Dendritic cell treated with granulocyte-macrophage colony-stimulating factor and Interleukin-4, amounts not matched to agents 40 ng/mL and 50 ng/mL, for 4 days (primary cell): ENCODE measurements at regions of chr11 and their contacts with region 1.

Region 1: DNA sequence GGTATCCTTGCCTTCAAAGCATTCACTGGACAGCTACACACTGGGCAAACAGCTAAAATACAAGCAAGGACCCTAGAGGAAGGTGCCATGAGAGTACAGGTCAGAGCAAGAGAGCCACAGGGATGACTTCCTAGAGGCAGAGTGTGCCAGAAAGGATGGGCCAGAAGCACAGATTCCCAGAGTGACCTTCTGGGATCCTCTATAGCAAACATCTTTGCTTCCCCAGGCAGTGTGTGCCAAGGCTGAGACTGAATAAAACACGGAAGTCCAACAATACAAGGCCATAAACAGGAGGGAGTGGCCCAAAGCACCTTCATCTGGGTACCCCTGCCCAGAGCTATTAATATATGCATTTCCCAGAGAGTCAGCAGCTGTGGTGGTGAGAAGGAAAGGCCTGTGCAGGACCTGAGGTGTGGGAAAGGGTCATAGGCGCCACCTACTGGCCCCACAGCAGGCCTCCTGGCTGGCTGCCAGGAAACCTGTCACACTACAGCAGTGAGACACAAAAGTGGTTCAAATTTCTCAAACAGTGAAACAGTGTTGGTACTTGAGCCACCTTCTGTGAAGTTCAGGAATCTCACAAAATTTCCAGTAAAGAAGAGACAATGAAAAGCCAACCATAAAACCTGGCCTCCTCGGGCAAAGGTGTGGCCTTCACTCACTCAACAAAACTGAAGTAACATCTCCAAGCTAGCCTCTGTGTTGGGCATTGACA is 20.3 kb downstream of the CLPB start:
- H3K4me3 Mint-ChIP-seq: no peak overlapping the region
- H3K27ac Mint-ChIP-seq: no peak overlapping the region
- H3K4me1 Mint-ChIP-seq: peaks cover 60% of the 10 kb centered on the region
- H3K27me3 Mint-ChIP-seq: no peaks in the 10 kb centered on the region

Region 2: DNA sequence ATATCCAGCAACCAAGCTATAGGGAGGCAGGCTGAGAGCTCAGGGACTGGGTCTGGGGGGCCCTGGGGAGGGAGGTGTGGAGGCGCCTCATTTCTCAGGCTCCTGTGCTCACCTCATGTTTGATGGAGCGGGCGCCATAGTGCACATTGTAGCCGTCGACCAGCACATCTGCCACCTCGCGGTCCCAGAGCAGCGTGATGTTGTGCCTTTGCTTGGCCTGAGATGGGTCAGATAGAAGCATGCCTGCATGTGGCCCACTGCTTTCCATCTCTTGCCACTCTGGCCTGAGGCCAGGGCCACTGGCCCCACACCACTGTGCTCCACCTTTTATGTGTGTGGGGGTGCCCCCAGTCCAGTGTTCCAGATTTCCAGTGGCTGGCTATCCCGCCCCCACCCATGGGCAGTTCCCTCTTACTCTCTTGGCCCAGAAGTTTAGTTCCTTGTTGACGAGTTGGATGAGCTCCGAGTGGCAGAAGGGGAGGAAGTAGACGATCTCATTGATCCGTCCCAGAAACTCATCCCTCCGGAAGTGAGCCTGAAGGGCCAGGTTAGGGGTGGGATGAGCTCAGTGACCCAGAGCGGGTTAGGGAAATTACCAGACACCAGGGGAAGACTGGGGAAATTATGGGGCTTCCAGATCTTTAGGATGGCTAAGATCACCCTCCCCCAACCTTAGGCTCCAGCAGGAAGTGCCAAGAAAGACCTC is 120.0 kb before region 1 on chr11:
- intact Hi-C with region 1: loop called (anchors 2 kb)
- H3K4me3 Mint-ChIP-seq: no peak overlapping the region
- H3K27ac Mint-ChIP-seq: peak overlapping the region; percentile 53
- H3K4me1 Mint-ChIP-seq: peaks cover 16% of the 10 kb centered on the region
- H3K27me3 Mint-ChIP-seq: no peaks in the 10 kb centered on the region